ENCODE measurements at regions of chr2 and their contacts with region 1.

Region 1: DNA sequence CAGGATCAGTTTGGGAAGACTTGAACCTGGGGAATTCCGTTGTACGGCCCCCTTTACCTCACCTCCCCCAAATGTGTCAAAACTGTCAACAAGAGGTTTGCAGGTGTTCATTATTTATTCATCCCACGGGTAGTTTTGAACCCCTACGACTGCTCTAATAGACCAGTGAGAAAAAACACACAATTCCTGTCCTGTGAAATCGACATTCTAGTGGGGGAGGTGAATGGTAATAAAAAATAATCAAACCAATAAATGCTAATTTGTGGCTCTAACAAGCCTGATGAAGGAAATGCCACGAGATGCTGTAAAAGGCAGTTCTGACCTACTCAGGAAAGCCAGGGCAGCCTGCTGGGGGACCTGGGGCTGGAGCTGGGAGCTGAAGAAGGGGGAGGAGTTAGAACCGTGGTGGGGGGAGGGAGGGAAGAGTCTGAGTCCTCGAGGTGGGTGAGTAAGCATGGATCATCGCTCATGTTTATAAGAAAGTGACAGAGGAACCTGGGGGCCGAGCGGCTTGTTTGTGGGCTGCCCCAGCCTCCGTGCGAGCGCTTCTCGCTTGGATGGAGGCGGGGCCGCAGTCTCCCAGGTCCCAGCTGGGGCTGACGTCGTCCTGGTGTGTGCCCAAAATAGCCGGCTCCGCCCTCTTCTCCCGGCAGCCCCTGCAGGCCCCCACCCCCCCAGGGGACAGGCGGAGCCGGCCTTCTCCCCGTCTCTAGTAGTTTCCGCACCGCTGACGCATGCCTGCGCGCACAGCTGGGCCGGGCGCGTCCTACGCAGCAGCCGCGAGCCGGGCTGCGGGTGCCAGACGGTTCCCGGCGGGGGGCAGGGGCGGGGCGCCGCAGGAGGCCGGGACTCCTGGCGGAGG is at the start of gene DNAJB2:
- DNase-seq: peak; percentile 99
- H3K4me3 ChIP-seq: peak within 1 kb of the TSS; percentile 83
- H3K27ac ChIP-seq: peak within 1 kb of the TSS; percentile 90
- H3K4me1 ChIP-seq: peaks cover 39% of the 10 kb centered on the region
- CTCF ChIP-seq: no peak
- total RNA-seq, gene DNAJB2: 49.9 and 53.0 TPM in 2 replicates

Region 2: DNA sequence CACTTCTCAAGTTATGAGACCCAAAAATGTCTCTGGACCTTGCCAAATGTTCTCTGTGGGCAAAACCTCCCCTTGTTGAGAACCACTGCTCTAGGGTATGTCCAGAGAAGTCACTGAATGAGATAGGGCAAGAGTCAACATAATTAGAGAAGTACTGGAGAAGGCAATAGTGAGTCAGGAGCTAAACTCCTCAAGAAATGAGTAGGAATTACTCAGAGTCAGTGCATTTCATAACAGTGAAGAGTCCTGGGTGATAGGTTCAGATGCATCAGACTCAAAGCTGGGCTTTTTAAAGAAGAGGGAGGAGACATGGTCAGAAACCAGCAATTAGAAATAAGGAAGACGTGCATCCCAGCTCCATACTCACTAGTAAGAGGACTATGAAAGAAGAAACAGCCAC is 179.6 kb before region 1 on chr2:
- CTCF ChIA-PET with region 1: no interaction called
- POLR2A ChIA-PET with region 1: no interaction called
- intact Hi-C with region 1: no loop called
- DNase-seq: no peak
- H3K4me3 ChIP-seq: no peak overlapping the region
- H3K27ac ChIP-seq: no peak overlapping the region
- H3K4me1 ChIP-seq: no peaks in the 10 kb centered on the region
- CTCF ChIP-seq: no peak

Region 3: DNA sequence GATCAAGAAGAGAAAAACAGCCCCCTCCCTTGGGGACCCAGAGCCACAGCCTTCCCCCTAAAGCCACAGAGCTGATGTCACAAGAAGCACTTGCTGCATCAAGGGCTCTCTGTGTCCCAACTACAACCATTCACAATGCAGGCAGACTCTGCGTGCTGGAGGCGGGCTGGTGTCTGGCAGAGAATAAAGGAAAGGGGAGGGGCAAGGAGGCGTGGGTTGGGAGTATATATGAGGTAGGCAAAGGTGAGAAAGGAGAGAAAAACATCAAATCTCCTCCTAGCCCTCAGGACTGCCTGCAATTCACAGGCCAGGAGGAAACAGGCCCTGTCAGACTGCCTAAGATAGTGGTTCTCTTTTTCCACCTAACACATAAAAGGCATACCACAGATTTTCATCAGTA is 169.4 kb before region 1 on chr2:
- CTCF ChIA-PET with region 1: no interaction called
- POLR2A ChIA-PET with region 1: no interaction called
- intact Hi-C with region 1: no loop called
- DNase-seq: no peak
- H3K4me3 ChIP-seq: no peak overlapping the region
- H3K27ac ChIP-seq: no peak overlapping the region
- H3K4me1 ChIP-seq: no peaks in the 10 kb centered on the region
- CTCF ChIP-seq: no peak

Region 4: DNA sequence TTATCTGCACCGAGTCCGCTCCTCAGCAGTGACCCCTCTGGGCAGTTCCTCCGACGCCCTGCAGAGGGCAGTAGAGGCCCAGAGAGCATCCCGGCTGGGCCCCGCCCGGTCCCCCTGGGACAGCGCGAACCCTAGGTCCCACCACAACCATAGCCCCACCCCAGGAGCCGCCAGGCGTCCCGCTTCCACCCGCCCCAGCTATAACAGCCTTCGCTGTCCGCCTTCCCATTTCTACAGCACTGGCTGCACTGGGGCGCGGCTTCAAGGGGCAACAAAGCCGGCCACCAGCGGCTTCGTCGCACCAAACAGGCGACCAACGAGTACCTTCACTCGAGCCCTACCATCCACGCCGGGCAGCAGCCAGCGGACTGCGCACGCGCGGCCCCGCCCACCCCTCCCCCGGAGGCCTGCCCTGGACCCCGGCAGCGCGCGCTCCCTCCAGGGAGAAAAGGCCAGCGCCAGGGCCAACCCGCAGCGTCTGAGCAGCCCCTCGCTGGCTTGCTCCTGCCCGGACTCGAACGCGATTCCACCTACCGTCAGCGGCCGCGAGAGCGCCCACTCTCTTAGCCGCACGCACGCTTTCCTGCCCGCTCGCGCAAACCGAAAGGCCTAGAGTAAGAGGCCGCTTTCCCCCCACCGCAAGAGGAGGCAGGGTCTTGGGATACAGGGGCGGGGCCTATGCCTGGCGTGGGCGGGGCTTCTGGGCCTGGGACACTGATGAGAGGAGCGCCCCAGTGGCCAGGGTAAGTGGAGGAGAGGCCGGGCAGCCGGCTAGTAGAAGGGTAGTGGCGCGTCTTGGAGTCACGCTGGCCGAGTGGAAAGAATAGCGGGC is 118.5 kb before region 1 on chr2 and contains the start of gene NHEJ1:
- CTCF ChIA-PET with region 1: interaction called, 4 read pairs
- POLR2A ChIA-PET with region 1: interaction called, 4 read pairs
- intact Hi-C with region 1: loop called (anchors 1 kb)
- DNase-seq: peak; percentile 91
- H3K4me3 ChIP-seq: peak within 1 kb of the TSS; percentile 73
- H3K27ac ChIP-seq: peak within 1 kb of the TSS; percentile 68
- H3K4me1 ChIP-seq: peaks cover 11% of the 10 kb centered on the region
- CTCF ChIP-seq: peak; percentile 94
- total RNA-seq, gene NHEJ1: 12.7 and 14.9 TPM in 2 replicates

Region 5: GRCh38 chr2:219206442-219207253 is 72.2 kb before region 1 on chr2 and contains the start of gene ZFAND2B:
- CTCF ChIA-PET with region 1: no interaction called
- POLR2A ChIA-PET with region 1: interaction called, 3 read pairs
- intact Hi-C with region 1: loop called (anchors 1 kb)
- DNase-seq: peak; percentile 97
- H3K4me3 ChIP-seq: peak within 1 kb of the TSS; percentile 69
- H3K27ac ChIP-seq: peak within 1 kb of the TSS; percentile 76
- H3K4me1 ChIP-seq: peaks cover 17% of the 10 kb centered on the region
- CTCF ChIP-seq: no peak
- total RNA-seq, gene ZFAND2B: 42.4 and 51.6 TPM in 2 replicates

Region 6: GRCh38 chr2:219245148-219245898 is 33.6 kb before region 1 on chr2 and contains the starts of genes GLB1L and STK16:
- CTCF ChIA-PET with region 1: interaction called, 10 read pairs
- POLR2A ChIA-PET with region 1: interaction called, 21 read pairs
- intact Hi-C with region 1: loop called (anchors 1 kb)
- DNase-seq: peak; percentile 94
- H3K4me3 ChIP-seq: peak within 1 kb of the TSS; percentile 84
- H3K27ac ChIP-seq: peak within 1 kb of the TSS; percentile 96
- H3K4me1 ChIP-seq: peaks cover 54% of the 10 kb centered on the region
- CTCF ChIP-seq: no peak
- total RNA-seq, gene GLB1L: 2.7 and 8.6 TPM in 2 replicates
- total RNA-seq, gene STK16: 19.6 and 23.4 TPM in 2 replicates

Region 7: GRCh38 chr2:219261024-219261855 is 17.6 kb before region 1 on chr2:
- CTCF ChIA-PET with region 1: interaction called, 12 read pairs
- POLR2A ChIA-PET with region 1: interaction called, 5 read pairs
- intact Hi-C with region 1: no loop called
- DNase-seq: no peak
- H3K4me3 ChIP-seq: no peak overlapping the region
- H3K27ac ChIP-seq: no peak overlapping the region
- H3K4me1 ChIP-seq: peaks cover 8% of the 10 kb centered on the region
- CTCF ChIP-seq: no peak

Region 8: DNA sequence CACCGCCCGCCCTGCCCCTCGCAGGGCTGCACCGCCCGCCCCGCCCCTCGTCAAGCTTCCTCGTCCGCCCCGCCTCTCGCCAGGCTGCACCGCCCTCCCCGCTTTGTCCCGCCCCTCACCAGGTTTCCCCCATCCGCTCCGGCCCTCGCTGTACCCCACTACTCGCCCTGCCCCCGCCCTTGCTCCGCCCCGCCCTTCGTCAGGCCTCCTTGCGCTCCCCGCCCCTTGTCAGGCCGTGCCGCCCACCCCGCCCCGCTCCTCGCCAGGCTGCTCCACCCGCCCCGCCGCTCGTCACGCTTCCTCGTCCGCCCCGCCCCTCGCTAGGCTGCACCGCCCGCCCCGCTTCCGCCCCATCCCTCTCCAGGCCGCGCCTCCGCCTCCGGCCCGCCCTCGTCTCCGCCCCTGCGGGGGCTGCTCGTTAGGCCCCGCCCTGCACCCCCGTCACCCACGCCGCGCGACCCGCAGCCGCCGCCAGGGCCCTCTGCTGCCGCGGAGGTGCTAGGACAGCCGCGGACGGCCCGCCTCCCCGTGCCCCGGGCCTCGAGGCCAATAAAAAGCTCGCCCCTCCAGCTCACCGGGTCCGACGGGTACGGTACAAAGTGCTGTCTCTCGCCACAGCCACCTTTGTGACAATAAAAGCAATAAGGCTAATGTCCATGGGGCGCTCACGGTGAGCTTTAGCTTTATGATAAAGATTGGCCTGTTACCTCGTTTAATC is 109.4 kb after region 1 on chr2:
- CTCF ChIA-PET with region 1: interaction called, 3 read pairs
- POLR2A ChIA-PET with region 1: interaction called, 4 read pairs
- intact Hi-C with region 1: loop called (anchors 2 kb)
- DNase-seq: peak; percentile 95
- H3K4me3 ChIP-seq: peak overlapping the region; percentile 59
- H3K27ac ChIP-seq: no peak overlapping the region
- H3K4me1 ChIP-seq: peaks cover 15% of the 10 kb centered on the region
- CTCF ChIP-seq: peak; percentile 74